ENCODE measurements at regions of chr1 and their contacts with region 1.

Region 1: GRCh38 chr1:154006136-154006535 is 15.6 kb downstream of the RPS27 start:
- DNase-seq: no peak
- ATAC-seq: no peak
- H3K4me3 ChIP-seq: no peak overlapping the region
- H3K27ac ChIP-seq: no peak overlapping the region
- H3K4me1 ChIP-seq: no peaks in the 10 kb centered on the region
- H3K27me3 ChIP-seq: no peaks in the 10 kb centered on the region

Region 2: GRCh38 chr1:153312570-153313193 is 693.5 kb before region 1 on chr1 and contains the start of gene PGLYRP3:
- intact Hi-C with region 1: no loop called
- DNase-seq: no peak
- ATAC-seq: no peak
- H3K4me3 ChIP-seq: no peak within 1 kb of the TSS
- H3K27ac ChIP-seq: no peak within 1 kb of the TSS
- H3K4me1 ChIP-seq: no peaks in the 10 kb centered on the region
- H3K27me3 ChIP-seq: no peaks in the 10 kb centered on the region
- total RNA-seq, gene PGLYRP3: not detected

Region 3: GRCh38 chr1:153365303-153366095 is 640.6 kb before region 1 on chr1:
- intact Hi-C with region 1: loop called in 1 of 2 experiments (anchors 10 kb)
- DNase-seq: no peak
- ATAC-seq: no peak
- H3K4me3 ChIP-seq: no peak overlapping the region
- H3K27ac ChIP-seq: no peak overlapping the region
- H3K4me1 ChIP-seq: no peaks in the 10 kb centered on the region
- H3K27me3 ChIP-seq: no peaks in the 10 kb centered on the region

Region 4: DNA sequence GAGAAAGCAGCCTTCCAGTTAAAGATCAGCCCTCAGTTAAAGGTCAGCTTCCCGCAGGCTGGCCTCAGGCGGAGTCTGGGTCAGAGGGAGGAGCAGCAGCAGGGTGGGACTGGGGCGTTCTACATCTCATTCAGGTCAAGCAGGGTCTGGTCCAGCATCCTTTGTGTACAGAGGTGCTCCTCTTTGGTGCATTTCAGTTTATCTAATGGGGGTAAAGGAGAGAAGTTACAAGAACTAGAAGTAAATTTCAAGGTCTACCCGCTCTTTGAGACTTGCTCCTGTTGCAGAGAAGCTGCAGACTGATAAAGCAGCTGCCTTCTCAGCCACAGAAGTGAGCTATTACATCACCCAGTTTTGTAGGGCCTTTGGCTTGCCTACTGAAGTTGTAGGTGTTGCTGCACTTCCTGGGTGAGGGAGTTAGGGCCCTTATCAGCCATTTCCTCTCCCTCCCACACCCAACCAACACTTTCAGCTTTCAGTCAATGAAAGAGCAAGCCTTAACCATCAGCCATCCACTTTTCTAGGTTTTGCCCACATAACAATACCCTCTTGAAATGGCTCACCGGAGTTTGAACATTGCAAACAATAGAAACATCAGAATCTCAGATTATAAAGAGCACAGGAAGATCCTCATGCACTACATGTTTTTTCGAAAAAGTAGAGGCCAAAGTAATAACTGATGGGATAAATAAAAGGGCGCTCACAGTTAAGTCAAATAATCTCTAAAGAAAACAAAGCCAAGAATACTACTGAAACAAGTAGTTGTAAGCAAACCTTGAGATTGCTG is 151.6 kb after region 1 on chr1:
- intact Hi-C with region 1: loop called (anchors 10 kb)
- DNase-seq: no peak
- ATAC-seq: no peak
- H3K4me3 ChIP-seq: no peak overlapping the region
- H3K27ac ChIP-seq: peak overlapping the region in 1 of 2 donors; percentile 52
- H3K4me1 ChIP-seq: no peaks in the 10 kb centered on the region
- H3K27me3 ChIP-seq: no peaks in the 10 kb centered on the region

Measured in aorta (tissue), 5 donors.